OCI-LY7 (cell line): ENCODE measurements at regions of chr3 and their contacts with region 1.

Region 1: GRCh38 chr3:4350789-4351163 is 47.6 kb downstream of the SETMAR start:
- DNase-seq: peak; percentile 72
- H3K4me3 ChIP-seq: no peak overlapping the region
- H3K27ac ChIP-seq: no peak overlapping the region
- H3K4me1 ChIP-seq: no peaks in the 10 kb centered on the region
- CTCF ChIP-seq: peak; percentile 97

Region 2: GRCh38 chr3:4297486-4297885 is 53.3 kb before region 1 on chr3:
- CTCF ChIA-PET with region 1: no interaction called
- POLR2A ChIA-PET with region 1: no interaction called
- intact Hi-C with region 1: no loop called
- DNase-seq: no peak
- H3K4me3 ChIP-seq: no peak overlapping the region
- H3K27ac ChIP-seq: no peak overlapping the region
- H3K4me1 ChIP-seq: no peaks in the 10 kb centered on the region
- CTCF ChIP-seq: no peak

Region 3: GRCh38 chr3:4334548-4334947 is 16.2 kb before region 1 on chr3:
- CTCF ChIA-PET with region 1: no interaction called
- POLR2A ChIA-PET with region 1: no interaction called
- intact Hi-C with region 1: no loop called
- DNase-seq: no peak
- H3K4me3 ChIP-seq: no peak overlapping the region
- H3K27ac ChIP-seq: no peak overlapping the region
- H3K4me1 ChIP-seq: no peaks in the 10 kb centered on the region
- CTCF ChIP-seq: peak; percentile 57

Region 4: DNA sequence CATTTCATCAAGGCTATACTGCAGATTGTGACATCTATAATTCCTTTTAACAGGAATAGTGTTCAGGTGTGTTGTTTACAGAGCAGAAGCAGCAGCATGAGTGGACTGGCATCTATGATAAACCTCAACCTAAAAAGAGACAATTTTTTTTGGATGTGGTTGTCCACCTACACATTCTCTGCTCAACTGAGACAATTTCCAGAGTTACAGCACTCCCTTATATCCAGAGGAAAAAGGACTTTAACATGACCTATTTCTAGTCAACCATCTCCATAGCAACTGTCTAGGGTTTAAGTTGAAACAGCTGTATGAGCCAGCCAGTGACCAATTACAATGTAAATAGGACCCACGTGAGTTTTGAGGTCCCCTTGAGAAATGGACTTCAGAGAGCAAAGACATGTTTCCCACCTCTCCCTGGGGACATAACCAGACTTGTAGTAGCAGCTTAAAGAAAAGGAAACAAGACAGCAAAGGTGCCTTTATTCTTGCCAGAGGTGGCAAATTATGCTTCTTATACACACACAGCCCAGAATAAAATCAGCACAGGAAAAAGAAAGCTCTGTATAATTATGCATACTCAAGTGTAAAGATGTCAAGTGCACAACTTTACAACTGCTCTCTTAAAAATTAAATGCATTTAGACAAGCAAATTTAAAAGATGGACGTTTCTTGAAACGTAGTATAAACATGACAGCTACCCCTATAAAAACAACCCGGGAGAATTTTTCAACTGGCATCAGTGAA is 76.0 kb after region 1 on chr3:
- CTCF ChIA-PET with region 1: no interaction called
- POLR2A ChIA-PET with region 1: no interaction called
- intact Hi-C with region 1: no loop called
- DNase-seq: peak; percentile 10
- H3K4me3 ChIP-seq: no peak overlapping the region
- H3K27ac ChIP-seq: no peak overlapping the region
- H3K4me1 ChIP-seq: no peaks in the 10 kb centered on the region
- CTCF ChIP-seq: no peak

Region 5: GRCh38 chr3:4571690-4572334 is 221.0 kb after region 1 on chr3:
- CTCF ChIA-PET with region 1: no interaction called
- POLR2A ChIA-PET with region 1: no interaction called
- intact Hi-C with region 1: loop called (anchors 2 kb)
- DNase-seq: peak; percentile 45
- H3K4me3 ChIP-seq: no peak overlapping the region
- H3K27ac ChIP-seq: no peak overlapping the region
- H3K4me1 ChIP-seq: no peaks in the 10 kb centered on the region
- CTCF ChIP-seq: peak; percentile 75

Region 6: GRCh38 chr3:4633078-4634004 is 282.6 kb after region 1 on chr3:
- CTCF ChIA-PET with region 1: interaction called, 15 read pairs
- POLR2A ChIA-PET with region 1: interaction called, 4 read pairs
- intact Hi-C with region 1: loop called (anchors 1 kb)
- DNase-seq: peak; percentile 57
- H3K4me3 ChIP-seq: no peak overlapping the region
- H3K27ac ChIP-seq: no peak overlapping the region
- H3K4me1 ChIP-seq: no peaks in the 10 kb centered on the region
- CTCF ChIP-seq: peak; percentile 98